ENCODE measurements at regions of chr15 and their contacts with region 1.

Region 1: DNA sequence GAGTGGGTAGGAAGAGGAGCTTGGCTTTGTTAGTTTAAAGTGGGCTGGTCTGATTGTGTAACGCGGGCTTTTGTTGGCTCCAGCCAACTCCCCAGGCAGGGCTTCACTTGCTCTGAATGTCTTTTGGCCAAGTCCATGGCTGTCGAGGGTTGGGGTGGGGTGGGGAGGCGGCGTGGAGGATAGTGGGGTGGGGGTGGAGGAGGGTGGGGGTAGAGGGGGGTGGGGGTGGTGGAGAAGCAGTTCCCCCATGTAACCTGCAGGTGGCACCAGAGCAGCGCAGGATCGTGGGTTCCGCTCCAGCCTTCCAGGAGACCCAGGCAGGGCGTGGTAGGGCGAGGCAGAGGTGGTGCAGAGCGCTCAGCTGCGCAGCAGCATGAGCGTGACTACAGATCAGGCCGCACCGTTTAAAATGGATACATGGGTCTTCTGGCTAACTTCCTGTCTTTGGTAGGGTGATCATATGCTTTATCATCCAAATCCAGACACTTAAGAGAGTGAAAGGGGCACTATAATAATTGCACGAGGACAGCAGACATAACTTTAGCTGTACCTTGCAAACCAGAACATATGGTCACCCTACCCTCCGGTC is 28.3 kb downstream of the GOLGA6A start:
- DNase-seq: peak; percentile 75
- H3K4me3 Mint-ChIP-seq: no peak overlapping the region
- H3K27ac Mint-ChIP-seq: no peak overlapping the region
- H3K4me1 Mint-ChIP-seq: peaks cover 33% of the 10 kb centered on the region
- H3K27me3 Mint-ChIP-seq: no peaks in the 10 kb centered on the region
- CTCF ChIP-seq: peak; percentile 71

Region 2: DNA sequence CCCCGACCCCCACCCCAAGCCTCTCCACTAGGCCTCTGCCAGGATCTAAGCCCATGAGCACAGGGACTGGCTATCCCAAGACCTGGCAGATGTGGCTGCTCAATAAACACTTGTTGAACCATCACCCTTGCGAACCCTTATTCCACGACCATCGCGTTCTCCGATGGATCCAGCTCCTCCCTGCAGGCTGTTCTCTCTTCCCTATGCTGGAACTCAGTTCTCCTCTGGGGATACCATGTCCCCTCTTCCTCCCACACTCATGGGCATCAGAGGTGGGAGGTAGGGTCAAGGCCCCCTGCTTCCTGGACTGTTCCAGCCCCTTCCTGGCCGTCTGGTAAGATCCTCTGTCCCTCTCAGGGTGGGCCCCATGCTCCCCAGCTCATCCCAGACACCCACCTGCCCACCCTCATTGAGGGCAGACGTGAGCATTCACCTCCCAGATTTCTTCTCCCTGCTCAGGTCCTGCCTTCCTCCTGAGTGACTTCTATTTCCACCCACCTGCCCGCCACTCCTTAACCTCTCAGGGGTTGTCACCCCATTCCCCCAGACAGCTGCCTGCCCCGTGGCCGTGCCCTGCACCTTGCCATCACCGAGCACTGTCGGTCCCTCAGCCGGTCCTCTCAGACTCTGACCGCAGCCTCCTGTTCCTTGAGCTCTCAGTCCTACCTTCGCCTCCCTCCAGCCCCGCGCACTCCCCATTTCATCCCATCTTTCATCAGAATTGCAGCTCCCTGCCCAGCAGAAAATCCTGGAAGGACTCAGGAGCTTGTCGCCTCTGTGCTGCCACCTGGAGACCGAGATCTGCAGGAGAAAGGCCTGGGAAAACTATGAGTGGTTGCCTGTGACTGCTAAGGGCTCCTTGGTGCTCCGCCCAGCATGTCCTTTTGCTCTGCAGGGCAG is 17.5 kb before region 1 on chr15:
- CTCF ChIA-PET with region 1: interaction called, 39 read pairs
- POLR2A ChIA-PET with region 1: interaction called, 3 read pairs
- intact Hi-C with region 1: no loop called
- DNase-seq: peak; percentile 56
- H3K4me3 Mint-ChIP-seq: no peak overlapping the region
- H3K27ac Mint-ChIP-seq: peak overlapping the region; percentile 32
- H3K4me1 Mint-ChIP-seq: peaks cover 19% of the 10 kb centered on the region
- H3K27me3 Mint-ChIP-seq: no peaks in the 10 kb centered on the region
- CTCF ChIP-seq: peak; percentile 44

Region 3: GRCh38 chr15:74108111-74108510 is 54.1 kb after region 1 on chr15:
- CTCF ChIA-PET with region 1: no interaction called
- POLR2A ChIA-PET with region 1: no interaction called
- intact Hi-C with region 1: no loop called
- DNase-seq: no peak
- H3K4me3 Mint-ChIP-seq: no peak overlapping the region
- H3K27ac Mint-ChIP-seq: no peak overlapping the region
- H3K4me1 Mint-ChIP-seq: peaks cover 6% of the 10 kb centered on the region
- H3K27me3 Mint-ChIP-seq: no peaks in the 10 kb centered on the region
- CTCF ChIP-seq: no peak

Region 4: DNA sequence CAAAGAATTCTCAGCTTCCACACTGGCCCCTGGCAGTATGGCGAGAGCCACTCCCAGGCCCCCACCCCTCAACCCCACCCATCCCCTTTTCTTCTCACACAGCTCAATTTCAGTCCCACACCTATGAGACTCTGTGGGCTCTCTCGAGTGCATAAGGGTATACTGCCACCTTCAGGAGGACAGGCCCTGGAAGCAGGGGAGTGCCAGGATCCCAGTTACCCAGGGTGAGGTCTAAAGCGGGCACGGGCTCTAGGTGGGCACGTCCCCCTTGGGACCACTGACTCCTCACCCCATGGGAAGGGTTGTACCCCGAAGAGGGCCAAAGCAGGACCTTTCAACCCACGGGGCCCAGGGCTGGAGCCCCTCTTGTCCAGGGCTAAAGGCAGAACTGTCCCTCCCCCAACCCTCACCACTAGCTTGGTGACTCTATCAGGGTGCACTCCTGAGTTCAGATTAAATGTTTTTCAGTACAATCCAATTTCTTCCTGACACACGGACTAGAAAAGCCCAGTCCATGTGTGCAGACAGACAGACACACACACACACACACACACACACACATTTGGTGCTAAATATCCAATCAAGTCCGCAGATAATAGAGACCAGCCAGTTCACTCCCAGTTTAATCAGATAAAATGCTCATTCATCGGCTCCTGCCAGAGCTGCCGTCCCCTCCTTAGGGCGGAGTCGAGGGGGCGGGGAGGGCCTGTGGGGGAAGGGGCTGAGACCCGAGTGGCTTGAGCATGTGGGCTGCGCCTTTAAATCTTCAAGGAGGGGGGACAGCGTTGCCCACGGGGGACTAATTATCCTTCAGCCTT is 254.0 kb after region 1 on chr15:
- CTCF ChIA-PET with region 1: interaction called, 39 read pairs
- POLR2A ChIA-PET with region 1: no interaction called
- intact Hi-C with region 1: no loop called
- DNase-seq: peak; percentile 77
- H3K4me3 Mint-ChIP-seq: no peak overlapping the region
- H3K27ac Mint-ChIP-seq: no peak overlapping the region
- H3K4me1 Mint-ChIP-seq: peaks cover 5% of the 10 kb centered on the region
- H3K27me3 Mint-ChIP-seq: peaks cover 60% of the 10 kb centered on the region
- CTCF ChIP-seq: peak; percentile 73

Region 5: GRCh38 chr15:74631408-74632247 is 577.6 kb after region 1 on chr15:
- CTCF ChIA-PET with region 1: no interaction called
- POLR2A ChIA-PET with region 1: no interaction called
- intact Hi-C with region 1: no loop called
- DNase-seq: peak; percentile 58
- H3K4me3 Mint-ChIP-seq: no peak overlapping the region
- H3K27ac Mint-ChIP-seq: no peak overlapping the region
- H3K4me1 Mint-ChIP-seq: no peaks in the 10 kb centered on the region
- H3K27me3 Mint-ChIP-seq: no peaks in the 10 kb centered on the region
- CTCF ChIP-seq: peak; percentile 76

Measured in MCF 10A (cell line).